Gastrocnemius medialis (tissue), 4 donors: ENCODE measurements at regions of chr19 and their contacts with region 1.

Region 1: DNA sequence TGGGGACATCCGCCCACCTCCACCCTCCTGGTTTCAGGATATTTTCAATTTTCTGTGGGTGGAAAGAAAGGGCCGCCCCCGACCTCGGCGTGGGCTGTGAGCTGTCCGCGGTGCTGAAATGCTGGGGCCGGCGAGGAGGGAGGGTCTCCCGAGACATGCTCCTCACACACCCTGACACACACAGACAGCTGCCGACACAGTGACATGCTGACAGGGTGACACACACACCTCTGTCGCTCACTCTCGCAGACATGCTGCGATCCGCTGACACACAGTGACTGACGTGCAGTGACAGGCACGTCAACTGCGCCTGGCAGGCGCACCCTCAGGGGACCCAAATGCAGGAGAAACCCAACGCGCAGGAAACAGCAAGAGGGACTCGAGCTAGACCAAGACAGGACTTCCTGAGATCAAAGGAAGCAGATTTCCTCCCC is 25.1 kb upstream of the MEIS3 start:
- DNase-seq: no peak
- ATAC-seq: no peak
- H3K4me3 ChIP-seq: no peak overlapping the region
- H3K27ac ChIP-seq: no peak overlapping the region
- H3K4me1 ChIP-seq: no peaks in the 10 kb centered on the region
- H3K27me3 ChIP-seq: peaks cover 71 to 75% (median 74%) of the 10 kb centered on the region in 3 donors
- CTCF ChIP-seq: no peak
- POLR2A ChIP-seq: no peak

Region 2: GRCh38 chr19:47398707-47399597 is 45.5 kb before region 1 on chr19:
- in situ Hi-C with region 1: no loop called
- intact Hi-C with region 1: no loop called
- DNase-seq: no peak
- ATAC-seq: no peak
- H3K4me3 ChIP-seq: no peak overlapping the region
- H3K27ac ChIP-seq: no peak overlapping the region
- H3K4me1 ChIP-seq: no peaks in the 10 kb centered on the region
- H3K27me3 ChIP-seq: peaks cover 0 to 6% (median 0%) of the 10 kb centered on the region in 3 donors
- CTCF ChIP-seq: no peak
- POLR2A ChIP-seq: no peak

Region 3: DNA sequence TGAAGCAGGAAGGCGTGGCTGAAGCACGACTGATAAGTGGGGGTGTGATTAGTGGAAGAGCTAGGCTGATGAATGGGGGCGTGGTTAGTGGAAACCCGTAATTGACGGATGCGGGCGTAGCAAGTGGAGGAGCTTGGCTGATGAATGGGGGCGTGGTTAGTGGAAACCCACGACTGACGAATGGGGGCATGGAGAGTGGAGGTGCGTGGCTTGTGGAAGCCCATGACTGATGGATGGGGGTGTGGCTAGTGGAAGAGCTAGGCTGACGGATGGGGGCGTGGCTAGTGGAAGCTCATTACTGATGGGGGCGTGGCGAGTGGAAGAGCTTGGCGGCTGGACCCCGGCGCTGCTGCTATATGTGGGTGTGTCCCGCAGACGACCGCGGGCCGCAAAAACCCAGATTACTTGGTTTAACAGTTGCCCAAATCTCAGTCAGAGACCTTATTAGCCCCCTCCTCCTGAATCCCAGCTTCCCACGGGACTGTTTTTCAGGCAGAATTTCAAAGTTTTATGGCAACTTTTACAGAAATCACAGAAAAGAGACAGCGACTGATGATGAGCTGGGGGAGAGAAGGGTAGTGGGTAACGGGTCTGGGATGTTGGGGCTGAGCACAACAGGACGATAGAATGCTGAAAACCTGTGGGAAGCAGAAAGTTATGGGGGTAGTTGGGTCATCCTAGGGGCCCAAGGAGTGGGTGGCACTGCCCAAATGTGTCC is 16.1 kb before region 1 on chr19:
- in situ Hi-C with region 1: no loop called
- intact Hi-C with region 1: no loop called
- DNase-seq: peak; percentile 30 to 48
- ATAC-seq: peak; percentile 63 to 68
- H3K4me3 ChIP-seq: no peak overlapping the region
- H3K27ac ChIP-seq: no peak overlapping the region
- H3K4me1 ChIP-seq: peaks cover 11 to 22% of the 10 kb centered on the region in 2 donors
- H3K27me3 ChIP-seq: peaks cover 65 to 76% (median 65%) of the 10 kb centered on the region in 3 donors
- CTCF ChIP-seq: no peak
- POLR2A ChIP-seq: no peak

Region 4: DNA sequence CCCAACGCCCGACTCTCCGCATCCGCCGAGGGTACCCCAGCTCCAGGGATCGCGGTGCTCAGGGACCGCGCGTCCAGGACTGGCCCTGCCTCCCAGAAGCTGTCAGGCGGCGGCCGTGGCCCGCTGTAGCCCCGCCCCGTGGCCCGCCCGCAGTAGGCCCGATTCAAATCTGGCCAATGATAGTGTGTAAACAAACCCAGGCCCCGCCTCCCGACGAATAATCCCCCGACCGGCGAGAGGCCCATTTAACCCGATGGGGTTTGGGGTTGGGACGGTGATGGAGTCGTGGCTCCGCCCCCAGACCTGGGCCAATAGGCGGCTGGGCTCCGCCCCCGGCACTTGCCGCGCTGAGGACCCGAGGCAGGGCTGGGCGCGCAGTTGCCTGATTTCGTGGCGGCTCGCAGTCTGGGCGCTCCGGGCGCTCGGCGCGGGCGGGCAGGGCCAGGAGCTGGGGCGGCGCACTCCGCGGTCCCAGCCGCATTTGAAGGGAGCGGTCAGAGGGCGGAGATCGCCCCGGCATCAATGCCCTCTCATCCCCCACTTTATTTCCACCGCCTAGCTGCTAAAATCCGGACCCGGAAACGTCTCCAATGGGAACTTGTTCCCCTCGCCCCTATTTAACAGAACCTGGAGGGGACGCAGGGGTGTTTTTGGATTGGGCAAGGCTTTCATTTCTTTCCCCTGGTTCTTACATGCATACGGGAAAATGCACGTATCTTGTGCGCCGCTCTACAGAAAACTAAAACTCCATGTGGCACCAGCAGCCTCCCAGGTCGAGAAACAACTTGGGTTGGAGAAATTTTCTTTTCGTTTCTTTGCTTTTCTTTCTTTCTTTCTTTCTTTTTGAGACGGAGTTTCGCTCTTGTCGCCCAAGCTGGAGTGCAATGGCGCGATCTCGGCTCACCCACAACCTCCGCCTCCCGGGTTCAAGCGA is 156.1 kb after region 1 on chr19:
- in situ Hi-C with region 1: no loop called
- intact Hi-C with region 1: no loop called
- DNase-seq: peak; percentile 99 to 100
- ATAC-seq: peak; percentile 96 to 97
- H3K4me3 ChIP-seq: peak overlapping the region; percentile 62 to 68 (median 63)
- H3K27ac ChIP-seq: peak overlapping the region; percentile 89 to 94 (median 92)
- H3K4me1 ChIP-seq: peaks cover 22 to 24% of the 10 kb centered on the region in 2 donors
- H3K27me3 ChIP-seq: no peaks in the 10 kb centered on the region
- CTCF ChIP-seq: peak in 2 of 5 experiments; percentile 10 to 34
- POLR2A ChIP-seq: peak; percentile 90 to 97

Region 5: GRCh38 chr19:47707135-47707925 is 262.9 kb after region 1 on chr19:
- in situ Hi-C with region 1: loop called (anchors 5 kb)
- intact Hi-C with region 1: no loop called
- DNase-seq: peak; percentile 36 to 71
- ATAC-seq: peak; percentile 81 to 89
- H3K4me3 ChIP-seq: no peak overlapping the region
- H3K27ac ChIP-seq: no peak overlapping the region
- H3K4me1 ChIP-seq: no peaks in the 10 kb centered on the region
- H3K27me3 ChIP-seq: no peaks in the 10 kb centered on the region
- CTCF ChIP-seq: peak; percentile 77 to 89 (median 87)
- POLR2A ChIP-seq: no peak